ENCODE measurements at regions of chr7 and their contacts with region 1.

Region 1: DNA sequence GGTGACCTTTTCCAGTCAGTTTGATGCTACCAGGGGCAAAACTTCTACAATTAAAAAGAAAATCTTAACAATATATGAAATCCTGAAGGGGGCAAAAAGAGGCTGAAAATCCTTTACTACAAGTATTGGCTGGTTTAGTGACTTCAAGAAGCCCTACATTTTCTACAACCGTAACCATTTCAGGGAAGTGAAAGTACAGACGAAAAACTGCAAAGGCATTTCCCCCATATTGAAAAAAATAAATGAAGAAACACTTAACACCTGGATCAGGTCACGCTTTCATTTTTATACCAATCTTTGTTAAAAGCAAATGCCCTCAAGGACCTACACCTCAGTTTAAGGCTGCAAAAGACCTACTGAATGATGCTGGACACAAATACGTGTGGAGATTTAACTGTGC is 38.6 kb downstream of the IL6 start:
- DNase-seq: no peak
- ATAC-seq: no peak
- H3K4me3 ChIP-seq: no peak overlapping the region
- H3K27ac ChIP-seq: no peak overlapping the region
- H3K4me1 ChIP-seq: no peaks in the 10 kb centered on the region
- H3K27me3 ChIP-seq: no peaks in the 10 kb centered on the region
- CTCF ChIP-seq: no peak

Region 2: GRCh38 chr7:22860784-22861482 is 95.3 kb after region 1 on chr7:
- CTCF ChIA-PET with region 1: no interaction called
- POLR2A ChIA-PET with region 1: interaction called, 12 read pairs
- in situ Hi-C with region 1: no loop called
- intact Hi-C with region 1: no loop called
- DNase-seq: no peak
- ATAC-seq: peak; percentile 58
- H3K4me3 ChIP-seq: no peak overlapping the region
- H3K27ac ChIP-seq: no peak overlapping the region
- H3K4me1 ChIP-seq: peaks cover 24% of the 10 kb centered on the region
- H3K27me3 ChIP-seq: no peaks in the 10 kb centered on the region
- CTCF ChIP-seq: peak; percentile 85